Ovary (tissue), 10 donors: ENCODE measurements at regions of chr16 and their contacts with region 1.

Region 1: GRCh38 chr16:4936991-4937781 is at the start of gene PPL:
- DNase-seq: peak; percentile 56 to 76 (median 68)
- H3K4me3 ChIP-seq: peak within 1 kb of the TSS; percentile 47
- H3K27ac ChIP-seq: peak within 1 kb of the TSS in 1 of 2 donors; percentile 39
- H3K4me1 ChIP-seq: peaks cover under 1% of the 10 kb centered on the region
- H3K27me3 ChIP-seq: no peaks in the 10 kb centered on the region
- CTCF ChIP-seq: no peak
- EP300 ChIP-seq: no peak
- POLR2A ChIP-seq: no peak
- total RNA-seq, gene PPL: 6.9 to 37.8 (median 17.4) TPM

Region 2: GRCh38 chr16:4852207-4852872 is 84.8 kb before region 1 on chr16:
- intact Hi-C with region 1: loop called in 3 of 4 experiments (anchors 10 kb)
- DNase-seq: no peak
- H3K4me3 ChIP-seq: no peak overlapping the region
- H3K27ac ChIP-seq: no peak overlapping the region
- H3K4me1 ChIP-seq: peaks cover 8% of the 10 kb centered on the region
- H3K27me3 ChIP-seq: no peaks in the 10 kb centered on the region
- CTCF ChIP-seq: no peak
- EP300 ChIP-seq: no peak
- POLR2A ChIP-seq: no peak

Region 3: DNA sequence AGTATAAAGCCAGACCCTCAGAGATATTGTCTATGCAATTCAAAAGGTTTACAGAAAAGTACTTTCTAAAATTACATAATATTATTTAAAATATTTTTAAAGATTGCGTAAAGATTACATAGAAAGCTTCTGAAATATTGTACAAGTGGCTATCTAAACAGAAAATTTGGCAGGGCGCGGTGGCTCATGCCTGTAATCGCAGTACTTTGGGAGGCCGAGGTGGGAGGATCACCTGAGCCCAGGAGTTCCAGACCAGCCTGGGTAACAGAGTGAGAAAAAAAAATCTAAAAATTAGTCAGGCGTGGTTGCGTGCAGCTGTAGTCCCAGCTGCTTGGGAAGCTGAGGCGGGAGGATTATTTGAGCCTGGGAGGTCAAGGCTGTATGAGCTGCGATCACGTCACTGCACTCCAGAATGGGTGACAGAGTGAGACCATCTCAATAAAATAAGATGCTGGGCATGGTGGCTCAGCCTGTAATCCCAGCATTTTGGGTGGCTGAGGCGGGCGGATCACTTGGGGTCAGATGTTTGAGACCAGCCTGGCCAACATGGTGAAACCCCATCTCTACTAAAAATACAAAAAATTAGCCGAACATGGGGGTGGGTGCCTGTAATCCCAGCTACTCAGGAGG is 71.8 kb before region 1 on chr16:
- intact Hi-C with region 1: no loop called
- DNase-seq: no peak
- H3K4me3 ChIP-seq: no peak overlapping the region
- H3K27ac ChIP-seq: no peak overlapping the region
- H3K4me1 ChIP-seq: no peaks in the 10 kb centered on the region
- H3K27me3 ChIP-seq: no peaks in the 10 kb centered on the region
- CTCF ChIP-seq: no peak
- EP300 ChIP-seq: no peak
- POLR2A ChIP-seq: no peak

Region 4: GRCh38 chr16:5001571-5001970 is 64.4 kb after region 1 on chr16:
- intact Hi-C with region 1: no loop called
- DNase-seq: no peak
- H3K4me3 ChIP-seq: no peak overlapping the region
- H3K27ac ChIP-seq: no peak overlapping the region
- H3K4me1 ChIP-seq: no peaks in the 10 kb centered on the region
- H3K27me3 ChIP-seq: no peaks in the 10 kb centered on the region
- CTCF ChIP-seq: no peak
- EP300 ChIP-seq: no peak
- POLR2A ChIP-seq: no peak